Caco-2 (cell line): ENCODE measurements at regions of chr2 and their contacts with region 1.

Region 1: DNA sequence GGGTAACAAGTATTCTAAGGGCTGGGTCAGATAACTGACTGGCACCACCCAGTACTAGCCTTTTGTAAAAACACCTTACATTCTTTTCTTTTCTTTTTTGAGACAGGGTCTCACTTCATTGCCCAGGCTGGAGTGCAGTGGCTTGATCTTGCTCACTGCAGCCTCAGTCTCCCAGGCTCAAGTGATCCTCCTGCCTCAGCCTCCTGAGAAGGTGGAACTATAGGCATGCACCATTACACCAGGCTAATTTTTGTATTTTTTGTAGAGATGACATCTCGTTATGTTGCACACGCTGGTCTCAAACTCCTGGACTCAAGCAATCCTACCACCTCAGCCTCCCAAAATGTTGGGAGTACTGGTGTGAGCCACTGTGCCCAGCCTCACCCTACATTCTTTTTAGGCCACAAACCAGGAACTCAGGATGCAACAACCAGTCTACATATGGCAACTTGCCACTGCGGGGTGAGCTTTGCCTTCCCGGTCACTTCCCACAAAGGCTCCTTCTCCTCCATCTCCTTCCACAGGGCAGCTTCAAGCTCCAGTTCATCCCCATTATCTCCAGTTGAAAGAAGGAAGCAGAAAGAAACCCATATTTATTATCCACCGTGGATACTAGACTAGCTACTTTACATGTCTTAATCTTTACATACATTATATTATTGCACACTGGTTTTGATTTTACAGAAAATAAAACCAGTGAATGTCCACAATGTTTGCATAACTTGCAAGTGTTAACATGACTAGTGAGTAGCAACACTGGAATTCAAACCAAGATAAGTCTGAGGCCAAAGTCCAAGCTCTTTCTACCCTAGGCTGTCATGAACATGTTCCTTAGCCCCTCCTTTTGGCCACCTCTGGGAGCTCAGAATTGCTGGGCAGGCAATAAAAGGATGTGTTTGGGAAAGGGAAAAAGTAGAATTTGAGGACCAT is 23.7 kb upstream of the AP1S3 start:
- DNase-seq: peak; percentile 92 to 94
- H3K4me3 ChIP-seq: no peak overlapping the region
- H3K4me3 Mint-ChIP-seq: peak overlapping the region; percentile 76
- H3K27ac Mint-ChIP-seq: peak overlapping the region; percentile 100
- H3K4me1 ChIP-seq: peaks cover 78% of the 10 kb centered on the region
- H3K4me1 Mint-ChIP-seq: peaks cover 66% of the 10 kb centered on the region
- H3K27me3 ChIP-seq: no peaks in the 10 kb centered on the region
- H3K27me3 Mint-ChIP-seq: no peaks in the 10 kb centered on the region
- CTCF ChIP-seq: peak; percentile 28 to 60

Region 2: DNA sequence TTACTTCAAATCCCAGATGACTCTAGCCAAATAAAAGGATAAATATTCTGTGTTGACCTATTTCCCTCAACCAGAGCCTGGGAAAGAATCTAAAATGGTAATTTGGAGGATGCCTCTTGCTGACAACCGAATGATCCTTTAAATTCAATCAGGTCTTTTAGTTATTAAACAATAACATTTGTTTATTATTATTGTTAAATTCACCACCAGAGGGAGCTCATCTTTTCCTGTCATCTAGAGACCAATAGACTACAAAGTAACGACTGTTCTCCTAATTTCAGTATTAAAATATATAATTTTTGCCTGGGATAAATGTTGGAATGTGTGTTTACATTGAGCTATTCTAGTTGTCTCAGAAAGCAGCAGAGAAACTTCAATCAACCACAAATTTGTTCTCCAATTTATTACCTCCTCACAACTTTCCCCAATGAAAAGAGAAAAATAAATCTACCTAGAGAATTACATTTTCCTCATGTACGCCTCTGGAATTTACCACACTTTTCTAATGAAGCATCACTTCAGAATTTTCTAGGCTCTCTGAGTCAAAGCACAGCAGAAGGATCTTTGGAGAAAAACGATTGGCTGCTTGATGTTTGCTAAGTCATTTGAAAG is 401.6 kb before region 1 on chr2:
- CTCF ChIA-PET with region 1: no interaction called
- POLR2A ChIA-PET with region 1: no interaction called
- intact Hi-C with region 1: loop called (anchors 5 kb)
- DNase-seq: no peak
- H3K4me3 ChIP-seq: no peak overlapping the region
- H3K4me3 Mint-ChIP-seq: no peak overlapping the region
- H3K27ac Mint-ChIP-seq: no peak overlapping the region
- H3K4me1 ChIP-seq: no peaks in the 10 kb centered on the region
- H3K4me1 Mint-ChIP-seq: no peaks in the 10 kb centered on the region
- H3K27me3 ChIP-seq: no peaks in the 10 kb centered on the region
- H3K27me3 Mint-ChIP-seq: no peaks in the 10 kb centered on the region
- CTCF ChIP-seq: peak; percentile 26 to 66

Region 3: GRCh38 chr2:223727562-223727961 is 133.5 kb before region 1 on chr2:
- CTCF ChIA-PET with region 1: interaction called, 9 read pairs
- POLR2A ChIA-PET with region 1: no interaction called
- intact Hi-C with region 1: loop called (anchors 1 kb)
- DNase-seq: peak; percentile 72 to 73
- H3K4me3 ChIP-seq: no peak overlapping the region
- H3K4me3 Mint-ChIP-seq: no peak overlapping the region
- H3K27ac Mint-ChIP-seq: no peak overlapping the region
- H3K4me1 ChIP-seq: peaks cover 32% of the 10 kb centered on the region
- H3K4me1 Mint-ChIP-seq: peaks cover 21% of the 10 kb centered on the region
- H3K27me3 ChIP-seq: no peaks in the 10 kb centered on the region
- H3K27me3 Mint-ChIP-seq: no peaks in the 10 kb centered on the region
- CTCF ChIP-seq: peak; percentile 82 to 88

Region 4: DNA sequence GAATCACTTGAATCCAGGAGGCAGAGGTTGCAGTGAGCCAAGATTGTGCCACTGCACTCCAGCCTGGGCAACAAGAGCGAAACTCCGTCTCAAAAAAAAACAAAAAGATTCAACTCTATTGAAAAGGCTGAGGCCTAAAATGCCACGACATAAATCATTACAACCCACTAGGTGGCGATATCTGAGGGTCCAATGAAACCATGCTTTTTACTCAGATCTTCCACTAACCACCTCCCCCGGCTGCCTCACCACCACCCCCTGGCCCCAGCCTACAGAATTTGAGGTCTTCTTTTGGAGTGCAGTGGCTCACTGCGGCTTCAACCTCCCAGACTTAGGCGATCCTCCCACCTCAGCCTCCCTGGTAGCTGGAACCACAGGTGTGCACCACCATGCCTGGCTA is 81.2 kb before region 1 on chr2:
- CTCF ChIA-PET with region 1: interaction called, 4 read pairs
- POLR2A ChIA-PET with region 1: interaction called, 3 read pairs
- intact Hi-C with region 1: loop called (anchors 1 kb)
- DNase-seq: peak; percentile 78 to 81
- H3K4me3 ChIP-seq: no peak overlapping the region
- H3K4me3 Mint-ChIP-seq: no peak overlapping the region
- H3K27ac Mint-ChIP-seq: no peak overlapping the region
- H3K4me1 ChIP-seq: peaks cover 5% of the 10 kb centered on the region; the same call in 1 of the 2 replicates
- H3K4me1 Mint-ChIP-seq: peaks cover 20% of the 10 kb centered on the region
- H3K27me3 ChIP-seq: no peaks in the 10 kb centered on the region
- H3K27me3 Mint-ChIP-seq: no peaks in the 10 kb centered on the region
- CTCF ChIP-seq: peak; percentile 40 to 56

Region 5: GRCh38 chr2:223837287-223838061 is 23.6 kb before region 1 on chr2 and contains the start of gene AP1S3:
- CTCF ChIA-PET with region 1: interaction called, 34 read pairs
- POLR2A ChIA-PET with region 1: interaction called, 8 read pairs
- intact Hi-C with region 1: loop called (anchors 1 kb)
- DNase-seq: peak; percentile 97 to 98
- H3K4me3 ChIP-seq: peak within 1 kb of the TSS; percentile 80
- H3K4me3 Mint-ChIP-seq: peak within 1 kb of the TSS; percentile 90
- H3K27ac Mint-ChIP-seq: peak within 1 kb of the TSS; percentile 75
- H3K4me1 ChIP-seq: peaks cover 40% of the 10 kb centered on the region
- H3K4me1 Mint-ChIP-seq: peaks cover 48% of the 10 kb centered on the region
- H3K27me3 ChIP-seq: no peaks in the 10 kb centered on the region
- H3K27me3 Mint-ChIP-seq: no peaks in the 10 kb centered on the region
- CTCF ChIP-seq: peak in 1 of 2 experiments; percentile 21
- total RNA-seq, gene AP1S3: 180 TPM in 2 replicates

Region 6: GRCh38 chr2:223957092-223957851 is 96.2 kb after region 1 on chr2 and contains the start of gene MRPL44:
- CTCF ChIA-PET with region 1: no interaction called
- POLR2A ChIA-PET with region 1: no interaction called
- intact Hi-C with region 1: loop called (anchors 2 kb)
- DNase-seq: peak; percentile 97 to 100
- H3K4me3 ChIP-seq: peak within 1 kb of the TSS; percentile 93
- H3K4me3 Mint-ChIP-seq: peak within 1 kb of the TSS; percentile 92
- H3K27ac Mint-ChIP-seq: peak within 1 kb of the TSS; percentile 98
- H3K4me1 ChIP-seq: peaks cover 12% of the 10 kb centered on the region
- H3K4me1 Mint-ChIP-seq: peaks cover 35% of the 10 kb centered on the region
- H3K27me3 ChIP-seq: no peaks in the 10 kb centered on the region
- H3K27me3 Mint-ChIP-seq: no peaks in the 10 kb centered on the region
- CTCF ChIP-seq: no peak
- total RNA-seq, gene MRPL44: 64.9 and 66.6 TPM in 2 replicates

Region 7: DNA sequence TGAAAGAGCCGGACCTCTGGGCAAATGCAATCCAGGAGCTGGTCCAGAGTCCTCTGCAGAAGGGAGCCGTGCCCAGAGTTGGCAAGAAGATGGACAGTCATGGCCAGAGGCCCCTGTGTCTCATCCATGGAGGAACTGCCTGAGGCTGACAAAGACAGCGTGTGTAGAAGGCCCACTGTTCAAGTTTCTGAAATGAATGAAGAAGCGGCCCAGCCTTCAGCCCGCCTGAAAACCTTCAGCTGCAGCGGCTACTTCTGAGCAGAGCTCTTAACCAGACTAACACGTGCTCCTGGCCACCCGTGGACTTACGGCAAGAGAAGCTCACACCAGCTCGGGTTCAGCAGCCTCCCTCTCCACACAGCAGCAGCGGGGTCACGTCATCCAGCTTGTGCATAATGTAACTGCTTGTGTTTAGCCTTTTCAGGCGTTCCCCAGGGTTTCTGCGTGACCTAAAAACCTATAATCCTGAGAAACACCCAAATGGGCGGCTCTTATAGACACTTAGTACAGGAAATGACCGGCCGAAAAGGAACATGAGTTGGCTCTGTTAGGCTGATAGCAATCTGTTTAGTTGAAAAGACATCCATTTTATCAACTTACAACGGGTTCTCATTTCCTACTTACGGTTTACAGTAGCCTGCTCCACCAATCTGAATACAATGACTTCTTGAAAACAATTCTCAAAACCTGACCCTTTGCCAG is 540.7 kb after region 1 on chr2 and contains the start of gene FAM124B:
- CTCF ChIA-PET with region 1: no interaction called
- POLR2A ChIA-PET with region 1: no interaction called
- intact Hi-C with region 1: no loop called
- DNase-seq: no peak
- H3K4me3 ChIP-seq: no peak within 1 kb of the TSS
- H3K4me3 Mint-ChIP-seq: no peak within 1 kb of the TSS
- H3K27ac Mint-ChIP-seq: no peak within 1 kb of the TSS
- H3K4me1 ChIP-seq: no peaks in the 10 kb centered on the region
- H3K4me1 Mint-ChIP-seq: no peaks in the 10 kb centered on the region
- H3K27me3 ChIP-seq: no peaks in the 10 kb centered on the region
- H3K27me3 Mint-ChIP-seq: peaks cover 9% of the 10 kb centered on the region
- CTCF ChIP-seq: no peak
- total RNA-seq, gene FAM124B: not detected in 2 replicates